KBM-7 (cell line): ENCODE measurements at regions of chr7 and their contacts with region 1.

Region 1: GRCh38 chr7:25862260-25863037 is 289.5 kb upstream of the NFE2L3 start:
- DNase-seq: peak; percentile 100

Region 2: GRCh38 chr7:25996006-25996408 is 133.6 kb after region 1 on chr7:
- in situ Hi-C with region 1: no loop called
- DNase-seq: no peak

Region 3: DNA sequence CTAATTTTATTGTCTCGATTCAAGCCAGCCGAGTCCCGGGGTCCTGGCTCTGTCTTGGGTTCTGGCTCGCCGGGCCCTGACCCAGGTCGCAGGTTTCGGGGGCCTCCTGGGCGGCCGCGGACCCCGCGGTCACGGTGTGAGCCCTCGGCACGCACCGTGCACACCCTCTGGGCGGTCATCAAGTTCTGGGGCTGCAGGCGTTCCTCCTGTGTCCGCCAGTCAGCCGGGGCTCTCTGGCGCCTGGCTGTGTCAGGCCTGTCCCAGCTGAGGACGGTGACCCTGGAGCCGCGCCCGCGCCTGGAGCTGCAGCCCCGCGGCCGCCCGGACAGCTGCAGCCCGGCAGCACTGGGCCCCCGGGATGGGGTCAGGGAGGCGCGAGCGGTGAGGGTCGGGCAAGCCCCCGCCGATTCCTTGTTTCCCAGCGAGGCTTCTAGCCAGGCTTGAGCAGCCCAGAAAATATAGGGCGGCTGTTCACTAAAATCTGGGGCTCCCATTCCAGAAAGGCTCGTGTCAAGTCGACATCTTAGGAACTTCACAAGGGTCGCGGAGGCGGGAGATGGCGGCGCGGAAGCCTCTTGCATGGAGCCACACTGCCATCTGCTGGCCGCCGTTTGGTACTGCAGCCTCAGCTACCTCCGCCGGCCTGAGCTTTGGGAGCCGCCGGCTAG is 1298.2 kb after region 1 on chr7:
- in situ Hi-C with region 1: loop called (anchors 25 kb)
- DNase-seq: peak; percentile 94